Heart left ventricle (tissue), 16 donors: ENCODE measurements at regions of chr15 and their contacts with region 1.

Region 1: GRCh38 chr15:43225201-43225949 is 4.6 kb upstream of the EPB42 start:
- DNase-seq: peak in 1 of 5 donors; percentile 24
- ATAC-seq: peak; percentile 59 to 86 (median 81)
- H3K4me3 ChIP-seq: no peak overlapping the region
- H3K27ac ChIP-seq: no peak overlapping the region
- H3K4me1 ChIP-seq: peaks cover 0 to 14% (median 0%) of the 10 kb centered on the region in 12 donors
- H3K27me3 ChIP-seq: no peaks in the 10 kb centered on the region
- CTCF ChIP-seq: peak; percentile 51 to 78 (median 68)
- POLR2A ChIP-seq: no peak

Region 2: GRCh38 chr15:43105778-43106485 is 119.4 kb before region 1 on chr15 and contains the start of gene UBR1:
- intact Hi-C with region 1: no loop called
- DNase-seq: peak; percentile 93 to 95 (median 94)
- ATAC-seq: peak; percentile 89 to 98 (median 98)
- H3K4me3 ChIP-seq: peak within 1 kb of the TSS; percentile 63 to 90 (median 80)
- H3K27ac ChIP-seq: peak within 1 kb of the TSS; percentile 62 to 98 (median 91)
- H3K4me1 ChIP-seq: peaks cover 0 to 48% (median 22%) of the 10 kb centered on the region in 12 donors
- H3K27me3 ChIP-seq: no peaks in the 10 kb centered on the region
- CTCF ChIP-seq: peak in 1 of 12 donors; percentile 11
- POLR2A ChIP-seq: peak in 1 of 2 donors; percentile 56
- total RNA-seq, gene UBR1: 21.0 to 38.9 (median 25.9) TPM

Region 3: DNA sequence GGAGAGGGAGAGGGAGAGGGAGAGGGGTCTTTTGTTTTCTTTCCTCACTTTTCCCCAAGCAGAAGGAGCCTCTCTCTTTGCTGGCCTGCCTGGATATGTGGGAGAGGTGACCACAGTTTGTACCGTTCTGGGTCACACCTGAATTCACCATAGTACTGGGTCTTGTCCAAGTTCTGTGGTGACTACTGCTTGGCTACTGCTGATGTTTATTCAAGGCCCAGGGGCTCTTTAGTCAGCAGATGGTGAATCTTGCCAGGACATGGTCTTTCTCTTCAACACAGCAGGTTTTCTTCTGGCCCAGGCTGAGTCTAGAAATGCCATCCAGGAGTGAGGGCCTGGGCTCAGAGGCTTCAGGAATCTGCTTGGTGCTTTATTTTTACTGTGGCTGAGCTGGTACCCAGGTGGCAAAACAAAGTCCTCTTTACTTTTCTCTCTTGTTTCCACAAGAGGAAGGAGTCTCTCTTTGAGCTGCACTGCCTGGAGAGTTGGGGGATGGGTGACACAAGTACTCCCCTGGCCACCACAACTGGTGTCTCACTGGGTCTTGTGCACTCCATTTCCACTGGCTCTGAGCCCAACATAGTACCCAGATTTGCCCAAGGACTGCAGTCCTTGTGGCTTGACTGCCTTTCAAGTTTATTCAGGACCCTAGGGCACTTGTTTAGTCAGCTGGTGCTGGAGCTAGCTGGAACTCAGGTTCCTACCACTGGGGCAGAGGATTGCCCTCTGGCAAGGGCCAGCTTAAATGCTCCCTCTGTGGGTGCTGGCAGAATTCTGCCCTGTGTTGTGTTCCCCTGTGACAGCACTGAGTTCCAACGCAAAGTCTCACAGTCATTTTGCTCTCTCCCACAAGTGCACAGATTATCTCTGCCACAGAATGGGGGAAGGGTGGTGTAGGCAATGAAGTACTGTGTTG is 56.9 kb before region 1 on chr15:
- intact Hi-C with region 1: loop called in 1 of 10 experiments (anchors 10 kb)
- DNase-seq: peak in 4 of 5 donors; percentile 29 to 36 (median 32)
- ATAC-seq: peak; percentile 87 to 96 (median 92)
- H3K4me3 ChIP-seq: no peak overlapping the region
- H3K27ac ChIP-seq: peak overlapping the region in 10 of 12 donors; percentile 35 to 78 (median 56)
- H3K4me1 ChIP-seq: peaks cover 0 to 15% (median 0%) of the 10 kb centered on the region in 12 donors
- H3K27me3 ChIP-seq: no peaks in the 10 kb centered on the region
- CTCF ChIP-seq: no peak
- POLR2A ChIP-seq: no peak

Region 4: DNA sequence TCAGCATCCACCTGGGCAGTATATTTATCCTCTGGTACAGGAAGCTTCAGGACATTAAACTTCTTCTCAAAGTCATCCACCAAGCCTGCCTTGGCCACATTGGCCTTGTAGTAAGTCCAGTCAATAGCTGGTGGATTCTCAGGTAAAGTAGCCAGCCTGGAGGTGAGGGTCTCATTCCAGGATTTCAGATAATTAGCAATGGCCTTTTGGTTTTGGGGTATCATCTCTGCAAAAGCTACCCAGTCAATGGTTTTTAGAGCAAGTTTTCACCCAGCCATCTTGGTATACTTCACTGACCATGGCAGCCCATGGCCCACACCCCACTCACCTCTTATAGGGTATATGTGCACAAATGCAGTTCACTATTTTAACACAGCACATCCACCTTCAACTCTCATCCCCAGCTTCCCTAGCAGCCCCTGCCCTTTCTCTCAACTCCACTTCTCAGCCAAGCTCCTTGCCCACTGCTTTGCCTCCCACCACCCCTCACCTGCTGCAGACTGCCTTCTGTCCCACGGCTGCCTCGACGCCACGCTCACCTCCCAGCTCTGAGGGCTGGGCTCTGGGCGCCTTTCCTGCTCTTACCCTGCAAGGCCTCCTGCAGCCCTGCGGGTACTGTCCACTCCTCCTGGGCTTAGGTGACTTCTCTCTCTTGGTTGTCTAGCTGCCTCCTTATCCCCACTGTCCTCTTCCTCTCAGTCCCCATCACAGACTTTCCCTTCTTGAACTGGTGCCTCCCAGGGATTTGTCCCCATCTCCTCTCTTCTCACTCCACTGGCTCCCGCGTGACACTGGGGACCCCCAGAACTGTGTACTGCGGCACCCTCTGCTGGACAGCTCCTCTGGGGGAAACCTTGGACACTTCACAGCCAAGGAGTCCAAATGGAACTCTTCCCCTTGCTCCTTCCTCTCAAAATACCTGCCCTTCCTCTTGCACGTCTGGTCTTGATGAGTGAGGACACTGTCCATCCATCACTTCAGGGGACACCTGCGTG is 43.0 kb after region 1 on chr15:
- intact Hi-C with region 1: no loop called
- DNase-seq: no peak
- ATAC-seq: peak in 2 of 4 donors; percentile 39 to 52
- H3K4me3 ChIP-seq: no peak overlapping the region
- H3K27ac ChIP-seq: no peak overlapping the region
- H3K4me1 ChIP-seq: peaks cover 0 to 2% (median 0%) of the 10 kb centered on the region in 12 donors
- H3K27me3 ChIP-seq: peaks cover 0 to 10% (median 0%) of the 10 kb centered on the region in 9 donors
- CTCF ChIP-seq: peak in 6 of 12 donors; percentile 7 to 33 (median 15)
- POLR2A ChIP-seq: no peak

Region 5: GRCh38 chr15:43285609-43286037 is 60.2 kb after region 1 on chr15:
- intact Hi-C with region 1: loop called (anchors 1 to 5 kb)
- DNase-seq: no peak
- ATAC-seq: peak in 3 of 4 donors; percentile 57 to 69 (median 68)
- H3K4me3 ChIP-seq: no peak overlapping the region
- H3K27ac ChIP-seq: no peak overlapping the region
- H3K4me1 ChIP-seq: no peaks in the 10 kb centered on the region
- H3K27me3 ChIP-seq: peaks cover 0 to 4% (median 0%) of the 10 kb centered on the region in 9 donors
- CTCF ChIP-seq: peak; percentile 67 to 86 (median 81)
- POLR2A ChIP-seq: no peak

Region 6: GRCh38 chr15:43550527-43551363 is 325.4 kb after region 1 on chr15:
- intact Hi-C with region 1: loop called in 1 of 10 experiments (anchors 10 kb)
- DNase-seq: peak in 1 of 5 donors; percentile 26
- ATAC-seq: peak in 2 of 4 donors; percentile 33 to 36
- H3K4me3 ChIP-seq: no peak overlapping the region
- H3K27ac ChIP-seq: peak overlapping the region in 2 of 12 donors; percentile 17 to 26
- H3K4me1 ChIP-seq: peaks cover 0 to 4% (median 0%) of the 10 kb centered on the region in 12 donors
- H3K27me3 ChIP-seq: no peaks in the 10 kb centered on the region
- CTCF ChIP-seq: no peak
- POLR2A ChIP-seq: no peak